A673 (cell line): ENCODE measurements at regions of chr6 and their contacts with region 1.

Region 1: GRCh38 chr6:149405823-149406765 is 6.0 kb downstream of the SUMO4 start:
- DNase-seq: peak; percentile 26
- H3K4me3 ChIP-seq: no peak overlapping the region
- H3K27ac ChIP-seq: peak overlapping the region; percentile 21
- H3K4me1 ChIP-seq: peaks cover 10% of the 10 kb centered on the region
- H3K27me3 ChIP-seq: no peaks in the 10 kb centered on the region
- CTCF ChIP-seq: no peak

Region 2: GRCh38 chr6:148471624-148472159 is 934.4 kb before region 1 on chr6:
- CTCF ChIA-PET with region 1: no interaction called
- POLR2A ChIA-PET with region 1: no interaction called
- intact Hi-C with region 1: no loop called
- DNase-seq: no peak
- H3K4me3 ChIP-seq: no peak overlapping the region
- H3K27ac ChIP-seq: no peak overlapping the region
- H3K4me1 ChIP-seq: no peaks in the 10 kb centered on the region
- H3K27me3 ChIP-seq: no peaks in the 10 kb centered on the region
- CTCF ChIP-seq: no peak

Region 3: GRCh38 chr6:148620579-148621298 is 785.4 kb before region 1 on chr6:
- CTCF ChIA-PET with region 1: no interaction called
- POLR2A ChIA-PET with region 1: no interaction called
- intact Hi-C with region 1: no loop called
- DNase-seq: no peak
- H3K4me3 ChIP-seq: no peak overlapping the region
- H3K27ac ChIP-seq: no peak overlapping the region
- H3K4me1 ChIP-seq: no peaks in the 10 kb centered on the region
- H3K27me3 ChIP-seq: no peaks in the 10 kb centered on the region
- CTCF ChIP-seq: no peak

Region 4: DNA sequence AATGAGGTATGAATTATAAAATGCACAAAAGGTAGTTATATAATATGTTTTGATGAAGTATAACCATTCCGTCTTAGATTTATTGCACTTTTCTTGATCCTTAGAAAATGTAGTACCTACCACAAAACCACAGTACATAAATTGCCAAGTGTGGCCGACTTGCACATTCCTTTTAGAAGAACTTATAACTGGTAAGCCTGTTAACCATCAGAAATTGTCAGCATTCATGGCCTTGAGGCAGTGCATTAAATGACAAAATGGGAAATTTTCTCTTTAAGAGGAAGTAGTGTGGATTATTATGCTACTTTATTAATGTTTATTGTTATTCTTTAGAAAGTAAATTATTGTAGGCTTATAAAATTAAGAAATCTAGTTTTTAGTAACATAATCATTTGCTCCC is 59.0 kb before region 1 on chr6:
- CTCF ChIA-PET with region 1: no interaction called
- POLR2A ChIA-PET with region 1: interaction called, 22 read pairs
- intact Hi-C with region 1: no loop called
- DNase-seq: no peak
- H3K4me3 ChIP-seq: no peak overlapping the region
- H3K27ac ChIP-seq: no peak overlapping the region
- H3K4me1 ChIP-seq: peaks cover 8% of the 10 kb centered on the region
- H3K27me3 ChIP-seq: no peaks in the 10 kb centered on the region
- CTCF ChIP-seq: no peak